ENCODE measurements at regions of chrX and their contacts with region 1.

Region 1: DNA sequence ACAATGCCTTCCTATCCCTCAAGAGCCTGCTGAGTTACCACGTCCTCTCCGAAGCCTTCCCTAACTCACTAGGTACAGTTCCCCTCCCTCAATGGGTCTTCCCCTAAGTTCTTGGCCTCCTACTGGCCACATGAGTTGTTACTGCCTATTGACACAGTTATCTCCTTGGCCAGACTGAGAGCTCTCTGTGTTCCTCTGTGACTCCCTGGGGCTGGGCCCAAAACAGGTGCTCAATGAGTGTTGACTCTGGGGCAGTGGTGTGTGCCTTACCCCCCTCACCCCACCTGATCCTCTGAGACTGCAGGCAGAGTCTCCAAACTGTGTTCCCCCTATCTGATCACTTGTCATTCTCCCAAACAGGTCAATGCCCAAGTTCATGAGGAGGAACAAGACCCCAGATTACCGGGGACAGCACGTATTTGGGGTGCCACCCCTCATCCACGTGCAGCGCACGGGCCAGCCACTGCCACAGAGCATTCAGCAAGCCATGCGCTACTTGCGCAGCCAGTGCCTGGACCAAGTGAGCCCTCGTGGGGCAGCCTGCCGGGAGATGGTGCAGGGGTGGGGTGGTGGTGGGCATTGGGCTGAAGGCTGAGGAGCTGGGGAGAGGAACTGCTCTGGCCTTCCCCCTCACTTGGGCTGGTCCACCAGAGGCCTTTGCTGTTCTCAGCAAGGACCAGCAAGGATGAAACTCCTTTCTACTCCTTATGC is 72.6 kb downstream of the STARD8 start:
- DNase-seq: no peak
- H3K4me3 ChIP-seq: no peak overlapping the region
- H3K27ac ChIP-seq: no peak overlapping the region
- H3K4me1 ChIP-seq: no peaks in the 10 kb centered on the region
- H3K27me3 ChIP-seq: no peaks in the 10 kb centered on the region
- CTCF ChIP-seq: no peak
- POLR2A ChIP-seq: no peak

Region 2: DNA sequence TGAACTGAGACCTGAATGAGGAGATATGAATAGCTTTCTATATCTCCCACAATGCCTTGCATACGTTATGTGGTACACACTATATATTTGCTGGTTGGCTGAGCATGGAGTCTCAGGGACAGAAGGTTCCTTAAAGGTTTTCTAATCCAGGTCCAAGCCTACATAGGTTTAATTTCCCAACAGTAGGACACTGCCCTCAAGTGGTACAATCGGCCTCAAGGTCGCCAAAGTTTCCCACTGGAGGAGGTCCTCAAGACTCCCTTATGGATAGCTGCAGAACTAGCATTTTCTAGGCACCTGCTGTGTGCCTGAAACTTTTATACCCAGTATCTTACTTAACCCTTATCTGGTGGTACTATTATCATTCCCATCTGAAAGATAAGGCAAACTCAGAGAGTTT is 87.8 kb after region 1 on chrX:
- intact Hi-C with region 1: loop called (anchors 10 kb)
- DNase-seq: peak in 1 of 2 donors; percentile 49
- H3K4me3 ChIP-seq: no peak overlapping the region
- H3K27ac ChIP-seq: no peak overlapping the region
- H3K4me1 ChIP-seq: no peaks in the 10 kb centered on the region
- H3K27me3 ChIP-seq: no peaks in the 10 kb centered on the region
- CTCF ChIP-seq: peak in 1 of 3 experiments; percentile 9
- POLR2A ChIP-seq: no peak